Caco-2 (cell line): ENCODE measurements at regions of chr20 and their contacts with region 1.

Region 1: GRCh38 chr20:54140927-54141566 is 32.7 kb downstream of the CYP24A1 start:
- DNase-seq: peak in 1 of 2 experiments; percentile 52
- H3K4me3 ChIP-seq: no peak overlapping the region
- H3K4me3 Mint-ChIP-seq: no peak overlapping the region
- H3K27ac Mint-ChIP-seq: peak overlapping the region; percentile 14
- H3K4me1 ChIP-seq: peaks cover 34% of the 10 kb centered on the region
- H3K4me1 Mint-ChIP-seq: peaks cover 4% of the 10 kb centered on the region
- H3K27me3 ChIP-seq: no peaks in the 10 kb centered on the region
- H3K27me3 Mint-ChIP-seq: no peaks in the 10 kb centered on the region
- CTCF ChIP-seq: no peak

Region 2: GRCh38 chr20:54093423-54094267 is 47.4 kb before region 1 on chr20:
- CTCF ChIA-PET with region 1: no interaction called
- POLR2A ChIA-PET with region 1: no interaction called
- intact Hi-C with region 1: no loop called
- DNase-seq: no peak
- H3K4me3 ChIP-seq: no peak overlapping the region
- H3K4me3 Mint-ChIP-seq: no peak overlapping the region
- H3K27ac Mint-ChIP-seq: no peak overlapping the region
- H3K4me1 ChIP-seq: no peaks in the 10 kb centered on the region
- H3K4me1 Mint-ChIP-seq: peaks cover 6% of the 10 kb centered on the region
- H3K27me3 ChIP-seq: no peaks in the 10 kb centered on the region
- H3K27me3 Mint-ChIP-seq: peaks cover 3% of the 10 kb centered on the region
- CTCF ChIP-seq: no peak

Region 3: GRCh38 chr20:54123587-54124180 is 17.4 kb before region 1 on chr20:
- CTCF ChIA-PET with region 1: no interaction called
- POLR2A ChIA-PET with region 1: no interaction called
- intact Hi-C with region 1: loop called (anchors 1 kb)
- DNase-seq: peak; percentile 94 to 97
- H3K4me3 ChIP-seq: no peak overlapping the region
- H3K4me3 Mint-ChIP-seq: peak overlapping the region; percentile 10
- H3K27ac Mint-ChIP-seq: peak overlapping the region; percentile 54
- H3K4me1 ChIP-seq: peaks cover 27% of the 10 kb centered on the region
- H3K4me1 Mint-ChIP-seq: peaks cover 19% of the 10 kb centered on the region
- H3K27me3 ChIP-seq: no peaks in the 10 kb centered on the region
- H3K27me3 Mint-ChIP-seq: no peaks in the 10 kb centered on the region
- CTCF ChIP-seq: no peak

Region 4: DNA sequence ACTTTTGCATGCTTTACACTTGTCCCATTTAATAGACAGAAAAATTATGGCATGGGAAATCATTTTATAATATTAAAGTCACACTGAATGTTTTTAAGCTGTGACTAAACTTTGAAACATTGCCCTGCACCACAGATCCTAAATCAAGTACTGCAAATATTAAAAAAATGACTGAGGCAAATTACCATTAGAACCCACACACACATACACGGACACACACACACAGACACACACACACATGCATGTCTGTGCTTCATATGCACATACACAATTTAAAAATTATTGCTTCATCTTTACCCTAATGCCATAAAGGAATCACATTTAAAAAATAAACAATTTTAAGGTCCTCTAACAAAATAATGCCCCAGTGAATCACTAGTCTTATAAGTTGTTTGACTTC is 12.8 kb after region 1 on chr20:
- CTCF ChIA-PET with region 1: no interaction called
- POLR2A ChIA-PET with region 1: no interaction called
- intact Hi-C with region 1: loop called (anchors 2 kb)
- DNase-seq: no peak
- H3K4me3 ChIP-seq: no peak overlapping the region
- H3K4me3 Mint-ChIP-seq: no peak overlapping the region
- H3K27ac Mint-ChIP-seq: no peak overlapping the region
- H3K4me1 ChIP-seq: peaks cover 11% of the 10 kb centered on the region; the same call in 1 of the 2 replicates
- H3K4me1 Mint-ChIP-seq: peaks cover 7% of the 10 kb centered on the region
- H3K27me3 ChIP-seq: no peaks in the 10 kb centered on the region
- H3K27me3 Mint-ChIP-seq: peaks cover 5% of the 10 kb centered on the region
- CTCF ChIP-seq: no peak